Thyroid gland (tissue), 4 donors: ENCODE measurements at regions of chr2 and their contacts with region 1.

Region 1: DNA sequence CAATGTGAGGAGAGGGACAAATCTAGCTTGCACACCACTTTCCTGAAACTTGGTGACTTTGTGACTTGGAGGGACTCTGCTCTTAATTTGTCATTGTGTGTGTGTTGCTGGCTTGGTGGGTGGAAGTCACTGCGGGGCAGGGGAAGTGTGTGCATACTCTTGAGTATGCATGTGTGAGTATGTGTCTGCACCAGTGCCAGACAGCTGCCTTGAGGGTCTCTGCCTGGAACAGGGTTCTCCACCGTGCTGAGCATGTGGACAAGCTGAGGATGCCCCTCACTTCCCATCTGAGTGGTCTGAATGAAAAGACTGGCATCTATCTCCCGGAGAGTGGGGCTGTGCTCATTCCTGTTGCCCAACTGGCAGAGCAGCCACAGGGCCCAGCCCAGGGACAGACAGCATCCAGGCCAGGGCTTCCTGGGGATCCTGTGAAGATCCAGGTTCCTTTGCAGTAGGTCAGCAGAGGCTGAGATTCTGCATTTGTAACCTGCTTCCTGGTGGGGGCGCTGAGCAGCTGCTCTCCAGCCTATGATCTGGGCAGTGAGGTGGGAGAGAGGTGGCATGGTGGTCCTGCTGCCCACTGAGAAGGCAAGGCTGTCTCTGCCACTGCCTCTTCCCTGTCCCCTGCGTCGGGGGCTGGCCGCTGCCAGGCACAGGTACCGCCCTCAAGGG is 138.9 kb upstream of the HAAO start:
- DNase-seq: no peak
- H3K4me3 ChIP-seq: no peak overlapping the region
- H3K27ac ChIP-seq: peak overlapping the region in 2 of 3 donors; percentile 44 to 51
- H3K4me1 ChIP-seq: peaks cover 62 to 91% of the 10 kb centered on the region in 2 donors
- H3K27me3 ChIP-seq: no peaks in the 10 kb centered on the region
- CTCF ChIP-seq: no peak
- POLR2A ChIP-seq: no peak

Region 2: GRCh38 chr2:42865884-42866881 is 65.1 kb before region 1 on chr2:
- intact Hi-C with region 1: loop called (anchors 10 kb)
- DNase-seq: peak; percentile 21 to 26
- H3K4me3 ChIP-seq: no peak overlapping the region
- H3K27ac ChIP-seq: peak overlapping the region; percentile 56 to 73 (median 56)
- H3K4me1 ChIP-seq: peaks cover 3 to 6% of the 10 kb centered on the region in 2 donors
- H3K27me3 ChIP-seq: no peaks in the 10 kb centered on the region
- CTCF ChIP-seq: no peak
- POLR2A ChIP-seq: no peak